GM10248 (cell line): ENCODE measurements at regions of chr9 and their contacts with region 1.

Region 1: GRCh38 chr9:137434498-137435380 is 6.4 kb downstream of the ENTPD8 start:
- DNase-seq: no peak
- CTCF ChIP-seq: no peak

Region 2: GRCh38 chr9:137396227-137396626 is 38.5 kb before region 1 on chr9:
- CTCF ChIA-PET with region 1: no interaction called
- POLR2A ChIA-PET with region 1: no interaction called
- DNase-seq: no peak
- CTCF ChIP-seq: no peak

Region 3: GRCh38 chr9:137445275-137445807 is 10.6 kb after region 1 on chr9:
- CTCF ChIA-PET with region 1: interaction called, 12 read pairs
- POLR2A ChIA-PET with region 1: no interaction called
- DNase-seq: peak; percentile 87
- CTCF ChIP-seq: peak; percentile 84